Ascending aorta (tissue), 2 donors: ENCODE measurements at regions of chr6 and their contacts with region 1.

Region 1: GRCh38 chr6:136737871-136738691 is 54.2 kb downstream of the MAP3K5 start:
- DNase-seq: peak in 1 of 2 donors; percentile 77
- H3K4me3 ChIP-seq: peak overlapping the region in 1 of 2 donors; percentile 12
- H3K27ac ChIP-seq: peak overlapping the region; percentile 78 to 82
- H3K4me1 ChIP-seq: peaks cover 8 to 47% of the 10 kb centered on the region in 2 donors
- H3K27me3 ChIP-seq: no peaks in the 10 kb centered on the region
- CTCF ChIP-seq: no peak

Region 2: GRCh38 chr6:134896900-134897299 is 1841.2 kb before region 1 on chr6:
- intact Hi-C with region 1: no loop called
- DNase-seq: no peak
- H3K4me3 ChIP-seq: no peak overlapping the region
- H3K27ac ChIP-seq: no peak overlapping the region
- H3K4me1 ChIP-seq: no peaks in the 10 kb centered on the region
- H3K27me3 ChIP-seq: no peaks in the 10 kb centered on the region
- CTCF ChIP-seq: no peak

Region 3: GRCh38 chr6:136365776-136366354 is 372.2 kb before region 1 on chr6:
- intact Hi-C with region 1: no loop called
- DNase-seq: peak; percentile 18 to 70
- H3K4me3 ChIP-seq: no peak overlapping the region
- H3K27ac ChIP-seq: no peak overlapping the region
- H3K4me1 ChIP-seq: peaks cover 0 to 2% of the 10 kb centered on the region in 2 donors
- H3K27me3 ChIP-seq: no peaks in the 10 kb centered on the region
- CTCF ChIP-seq: no peak

Region 4: GRCh38 chr6:136696238-136696637 is 41.8 kb before region 1 on chr6:
- intact Hi-C with region 1: loop called (anchors 5 kb)
- DNase-seq: peak in 1 of 2 donors; percentile 17
- H3K4me3 ChIP-seq: no peak overlapping the region
- H3K27ac ChIP-seq: peak overlapping the region in 1 of 2 donors; percentile 29
- H3K4me1 ChIP-seq: peaks cover 0 to 11% of the 10 kb centered on the region in 2 donors
- H3K27me3 ChIP-seq: no peaks in the 10 kb centered on the region
- CTCF ChIP-seq: no peak

Region 5: GRCh38 chr6:136772685-136773472 is 34.8 kb after region 1 on chr6:
- intact Hi-C with region 1: loop called (anchors 5 kb)
- DNase-seq: no peak
- H3K4me3 ChIP-seq: peak overlapping the region in 1 of 2 donors; percentile 8
- H3K27ac ChIP-seq: peak overlapping the region; percentile 49 to 72
- H3K4me1 ChIP-seq: peaks cover 17 to 57% of the 10 kb centered on the region in 2 donors
- H3K27me3 ChIP-seq: no peaks in the 10 kb centered on the region
- CTCF ChIP-seq: no peak

Region 6: DNA sequence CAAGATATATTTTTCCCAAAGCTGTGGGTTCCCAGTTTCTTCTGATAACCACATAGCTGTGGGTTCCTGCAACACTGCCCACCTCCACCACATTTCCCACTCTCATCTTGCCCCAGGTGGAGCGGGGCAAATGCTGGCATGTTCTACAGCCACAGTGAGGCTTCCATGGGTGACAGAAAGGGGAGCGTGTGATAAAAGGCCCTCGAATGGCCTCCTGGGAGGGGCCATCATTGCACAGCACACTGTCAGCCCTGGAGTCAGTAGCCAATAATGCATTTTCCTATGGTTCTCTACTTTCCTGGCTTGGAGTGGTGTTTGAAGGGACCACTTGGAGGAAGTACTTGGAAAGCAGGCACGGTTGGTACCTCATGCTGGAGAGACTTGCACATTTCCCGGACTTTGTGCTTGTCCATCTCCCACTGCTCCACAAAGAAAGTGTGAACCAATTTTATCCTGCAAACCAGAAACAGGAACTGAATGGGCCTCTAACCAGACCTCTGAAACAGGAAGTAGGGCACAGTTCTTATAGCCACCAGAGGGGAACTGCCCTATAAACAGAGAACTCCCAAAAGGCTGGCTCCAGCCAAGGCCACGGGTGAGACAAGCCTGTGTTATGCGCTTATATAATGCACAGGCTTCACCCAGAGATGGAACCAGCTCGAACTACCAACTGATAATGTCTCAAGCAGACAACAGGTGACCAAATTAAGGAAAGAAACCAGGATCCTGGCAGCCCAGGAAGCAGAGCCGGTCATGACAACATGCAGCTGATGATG is 45.6 kb after region 1 on chr6:
- intact Hi-C with region 1: no loop called
- DNase-seq: no peak
- H3K4me3 ChIP-seq: peak overlapping the region; percentile 6 to 41
- H3K27ac ChIP-seq: peak overlapping the region; percentile 44 to 93
- H3K4me1 ChIP-seq: peaks cover 15 to 67% of the 10 kb centered on the region in 2 donors
- H3K27me3 ChIP-seq: no peaks in the 10 kb centered on the region
- CTCF ChIP-seq: no peak

Region 7: DNA sequence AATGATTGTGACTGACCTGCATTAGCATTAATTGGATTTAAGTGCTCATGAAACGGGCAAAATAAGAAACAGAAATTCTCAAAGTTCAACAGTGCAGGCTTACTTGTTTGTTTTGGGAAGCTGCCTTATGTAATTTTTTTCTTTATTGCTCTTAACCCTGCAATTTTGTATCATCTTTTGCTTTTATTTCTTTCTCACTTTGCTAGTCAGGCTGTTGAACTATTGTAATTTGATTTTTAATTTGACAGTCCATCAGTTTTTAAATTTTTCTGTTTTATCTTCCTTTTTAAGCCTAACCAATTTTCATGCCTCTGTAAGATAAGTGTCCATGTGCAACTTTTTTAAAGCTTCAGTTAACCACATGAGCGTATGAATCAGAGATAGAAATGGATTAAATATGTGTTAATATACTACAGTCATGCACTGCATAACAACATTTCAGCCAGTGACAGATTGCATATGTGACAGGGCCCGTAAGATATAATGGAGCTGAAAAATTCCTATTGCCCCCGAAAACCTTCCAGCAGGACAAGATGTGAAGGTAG is 128.9 kb after region 1 on chr6:
- intact Hi-C with region 1: no loop called
- DNase-seq: no peak
- H3K4me3 ChIP-seq: no peak overlapping the region
- H3K27ac ChIP-seq: no peak overlapping the region
- H3K4me1 ChIP-seq: no peaks in the 10 kb centered on the region
- H3K27me3 ChIP-seq: no peaks in the 10 kb centered on the region
- CTCF ChIP-seq: no peak